ENCODE measurements at regions of chr11 and their contacts with region 1.

Region 1: GRCh38 chr11:19777377-19778102 is 64.9 kb downstream of the NAV2 start:
- DNase-seq: no peak
- ATAC-seq: peak; percentile 38
- H3K4me3 Mint-ChIP-seq: peak overlapping the region; percentile 86
- H3K27ac Mint-ChIP-seq: peak overlapping the region; percentile 87
- H3K4me1 Mint-ChIP-seq: peaks cover 68% of the 10 kb centered on the region
- H3K27me3 Mint-ChIP-seq: peaks cover 21% of the 10 kb centered on the region
- CTCF ChIP-seq: no peak

Region 2: DNA sequence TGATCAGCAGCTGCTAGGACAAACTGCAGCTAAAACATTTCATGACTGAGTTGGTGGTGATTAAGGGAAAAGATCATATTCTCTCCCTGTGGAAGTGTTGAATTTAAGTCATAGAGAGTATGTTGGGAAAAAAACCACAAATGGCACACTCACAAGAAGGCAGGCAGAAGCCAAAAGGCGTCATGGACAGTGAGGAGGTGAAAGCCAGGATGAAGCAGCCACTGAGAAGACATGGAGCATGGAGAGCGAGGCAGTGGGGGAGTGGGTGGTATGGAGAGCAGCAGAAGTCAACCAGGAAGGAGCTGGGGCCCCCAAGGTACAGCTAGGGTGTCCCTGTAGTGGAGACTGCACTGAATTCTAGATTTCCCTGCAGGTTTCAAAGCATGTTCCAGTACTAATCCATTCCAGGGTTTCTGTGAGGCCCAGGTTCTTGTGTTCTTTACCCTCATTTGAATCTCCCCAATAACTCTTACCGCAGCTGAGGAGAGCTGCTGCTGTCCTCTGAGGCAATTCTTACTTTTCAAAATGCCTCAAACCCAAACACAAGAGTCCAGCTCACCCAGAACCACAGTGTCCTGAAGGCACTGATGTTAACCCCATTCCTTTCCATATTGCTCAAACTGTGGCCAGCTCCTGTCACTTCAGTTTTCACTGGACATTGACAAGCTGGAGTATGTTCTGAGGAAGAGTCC is 345.0 kb before region 1 on chr11:
- CTCF ChIA-PET with region 1: no interaction called
- POLR2A ChIA-PET with region 1: no interaction called
- DNase-seq: no peak
- ATAC-seq: peak; percentile 59
- H3K4me3 Mint-ChIP-seq: no peak overlapping the region
- H3K27ac Mint-ChIP-seq: no peak overlapping the region
- H3K4me1 Mint-ChIP-seq: peaks cover 36% of the 10 kb centered on the region
- H3K27me3 Mint-ChIP-seq: no peaks in the 10 kb centered on the region
- CTCF ChIP-seq: no peak

Region 3: GRCh38 chr11:19561011-19561410 is 216.5 kb before region 1 on chr11:
- CTCF ChIA-PET with region 1: interaction called, 10 read pairs
- POLR2A ChIA-PET with region 1: no interaction called
- DNase-seq: no peak
- ATAC-seq: no peak
- H3K4me3 Mint-ChIP-seq: no peak overlapping the region
- H3K27ac Mint-ChIP-seq: no peak overlapping the region
- H3K4me1 Mint-ChIP-seq: peaks cover 20% of the 10 kb centered on the region
- H3K27me3 Mint-ChIP-seq: no peaks in the 10 kb centered on the region; the same call in 1 of the 2 replicates
- CTCF ChIP-seq: no peak

Region 4: GRCh38 chr11:19580646-19581045 is 196.9 kb before region 1 on chr11:
- CTCF ChIA-PET with region 1: no interaction called
- POLR2A ChIA-PET with region 1: no interaction called
- DNase-seq: no peak
- ATAC-seq: no peak
- H3K4me3 Mint-ChIP-seq: no peak overlapping the region
- H3K27ac Mint-ChIP-seq: no peak overlapping the region
- H3K4me1 Mint-ChIP-seq: peaks cover 10% of the 10 kb centered on the region
- H3K27me3 Mint-ChIP-seq: peaks cover 11% of the 10 kb centered on the region
- CTCF ChIP-seq: no peak

Region 5: GRCh38 chr11:19790831-19791552 is 13.5 kb after region 1 on chr11:
- CTCF ChIA-PET with region 1: interaction called, 20 read pairs
- POLR2A ChIA-PET with region 1: interaction called, 6 read pairs
- DNase-seq: peak; percentile 73
- ATAC-seq: peak; percentile 99
- H3K4me3 Mint-ChIP-seq: no peak overlapping the region
- H3K27ac Mint-ChIP-seq: 0 out of 2 replicates have a peak overlapping the region, but pooled peaks have one; percentile 16
- H3K4me1 Mint-ChIP-seq: peaks cover 59% of the 10 kb centered on the region
- H3K27me3 Mint-ChIP-seq: no peaks in the 10 kb centered on the region; the same call in 1 of the 2 replicates
- CTCF ChIP-seq: no peak